HEK293T (cell line): ENCODE measurements at regions of chr9 and their contacts with region 1.

Region 1: GRCh38 chr9:34675048-34675714 is 12.7 kb upstream of the CCL27 start:
- DNase-seq: peak; percentile 80

Region 2: GRCh38 chr9:34701023-34701768 is 26.0 kb after region 1 on chr9:
- CTCF ChIA-PET with region 1: interaction called, 11 read pairs
- POLR2A ChIA-PET with region 1: no interaction called
- DNase-seq: peak; percentile 91

Region 3: GRCh38 chr9:34737677-34738260 is 62.6 kb after region 1 on chr9:
- CTCF ChIA-PET with region 1: no interaction called
- POLR2A ChIA-PET with region 1: no interaction called
- DNase-seq: no peak

Region 4: GRCh38 chr9:34783951-34784487 is 108.8 kb after region 1 on chr9:
- CTCF ChIA-PET with region 1: no interaction called
- POLR2A ChIA-PET with region 1: no interaction called
- DNase-seq: no peak